Activated T-helper 1 cell treated with anti-CD3 and anti-CD28 coated beads, Interleukin-12 subunit alpha, Interleukin-12 subunit beta, Interleukin-2, Interleukin-4 antibody, amounts not matched to agents 30 ng/mL and 10 ng/mL and 1 ng/mL, durations not matched to agents 14 hours and 24 hours and 36 hours (primary cell): ENCODE measurements at regions of chr12 and their contacts with region 1.

Region 1: GRCh38 chr12:112992541-112993398 is 14.5 kb downstream of the OAS2 start:
- DNase-seq: peak; percentile 43
- H3K4me3 Mint-ChIP-seq: no peak overlapping the region
- H3K27ac Mint-ChIP-seq: peak overlapping the region; percentile 43
- H3K4me1 Mint-ChIP-seq: peaks cover 57% of the 10 kb centered on the region
- H3K27me3 Mint-ChIP-seq: no peaks in the 10 kb centered on the region

Region 2: GRCh38 chr12:112777387-112778310 is 215.1 kb before region 1 on chr12:
- intact Hi-C with region 1: no loop called
- DNase-seq: no peak
- H3K4me3 Mint-ChIP-seq: no peak overlapping the region
- H3K27ac Mint-ChIP-seq: no peak overlapping the region
- H3K4me1 Mint-ChIP-seq: no peaks in the 10 kb centered on the region
- H3K27me3 Mint-ChIP-seq: peaks cover 11% of the 10 kb centered on the region

Region 3: DNA sequence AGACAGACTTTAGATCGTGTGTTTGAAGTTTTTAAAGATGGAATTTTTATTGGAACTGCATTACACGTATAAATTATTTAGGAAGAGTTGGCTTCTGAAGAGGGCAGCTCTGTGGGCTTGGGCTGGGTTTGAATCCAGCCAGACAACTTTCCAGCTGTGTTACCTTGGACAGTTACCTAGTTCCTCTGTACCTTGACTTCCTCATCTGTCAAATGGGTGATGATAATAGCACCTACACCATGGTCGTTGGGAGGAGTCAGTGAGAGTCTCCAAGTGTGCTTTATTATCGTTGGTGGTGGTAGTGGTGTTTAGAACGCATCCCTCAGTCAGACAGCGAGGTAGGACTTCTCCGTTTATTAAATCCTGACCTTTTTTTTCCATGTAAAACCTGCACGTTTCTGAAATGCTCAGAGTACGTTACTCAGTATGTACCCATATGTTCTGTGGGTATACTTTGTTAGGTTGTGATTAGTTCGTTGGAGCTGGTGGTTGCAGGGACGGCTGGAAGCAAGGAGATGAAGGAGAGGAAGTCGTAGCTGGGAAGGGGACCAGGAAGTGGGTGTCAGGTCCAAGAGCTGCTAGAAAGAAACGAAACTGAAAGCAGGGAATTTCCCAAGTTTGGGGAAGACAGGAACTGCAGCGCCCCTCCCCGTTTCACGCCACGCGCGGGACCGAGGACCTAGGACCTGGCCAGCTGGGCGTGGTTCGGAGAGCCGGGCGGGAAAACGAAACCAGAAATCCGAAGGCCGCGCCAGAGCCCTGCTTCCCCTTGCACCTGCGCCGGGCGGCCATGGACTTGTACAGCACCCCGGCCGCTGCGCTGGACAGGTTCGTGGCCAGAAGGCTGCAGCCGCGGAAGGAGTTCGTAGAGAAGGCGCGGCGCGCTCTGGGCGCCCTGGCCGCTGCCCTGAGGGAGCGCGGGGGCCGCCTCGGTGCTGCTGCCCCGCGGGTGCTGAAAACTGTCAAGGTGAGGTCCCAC is 54.7 kb before region 1 on chr12 and contains the start of gene OAS3:
- intact Hi-C with region 1: loop called (anchors 2 kb)
- DNase-seq: peak; percentile 82
- H3K4me3 Mint-ChIP-seq: peak within 1 kb of the TSS; percentile 91
- H3K27ac Mint-ChIP-seq: peak within 1 kb of the TSS; percentile 95
- H3K4me1 Mint-ChIP-seq: peaks cover 60% of the 10 kb centered on the region
- H3K27me3 Mint-ChIP-seq: no peaks in the 10 kb centered on the region
- total RNA-seq, gene OAS3: 50.1 and 54.2 TPM in 2 replicates

Region 4: GRCh38 chr12:113174461-113175384 is 182.0 kb after region 1 on chr12:
- intact Hi-C with region 1: loop called (anchors 2 kb)
- DNase-seq: peak; percentile 55
- H3K4me3 Mint-ChIP-seq: no peak overlapping the region
- H3K27ac Mint-ChIP-seq: no peak overlapping the region
- H3K4me1 Mint-ChIP-seq: peaks cover 4% of the 10 kb centered on the region
- H3K27me3 Mint-ChIP-seq: no peaks in the 10 kb centered on the region